CD4-positive, alpha-beta T cell (primary cell): ENCODE measurements at regions of chr13 and their contacts with region 1.

Region 1: GRCh38 chr13:20940083-20940880 is 37.7 kb upstream of the XPO4 start:
- DNase-seq: no peak
- ATAC-seq: no peak
- H3K4me3 ChIP-seq: no peak overlapping the region
- H3K4me3 Mint-ChIP-seq: no peak overlapping the region
- H3K27ac ChIP-seq: no peak overlapping the region
- H3K27ac Mint-ChIP-seq: no peak overlapping the region
- H3K4me1 ChIP-seq: no peaks in the 10 kb centered on the region
- H3K4me1 Mint-ChIP-seq: no peaks in the 10 kb centered on the region
- H3K27me3 ChIP-seq: peaks cover 0 to 5% of the 10 kb centered on the region in 2 experiments
- H3K27me3 Mint-ChIP-seq: peaks cover 30% of the 10 kb centered on the region
- CTCF ChIP-seq: no peak

Region 2: DNA sequence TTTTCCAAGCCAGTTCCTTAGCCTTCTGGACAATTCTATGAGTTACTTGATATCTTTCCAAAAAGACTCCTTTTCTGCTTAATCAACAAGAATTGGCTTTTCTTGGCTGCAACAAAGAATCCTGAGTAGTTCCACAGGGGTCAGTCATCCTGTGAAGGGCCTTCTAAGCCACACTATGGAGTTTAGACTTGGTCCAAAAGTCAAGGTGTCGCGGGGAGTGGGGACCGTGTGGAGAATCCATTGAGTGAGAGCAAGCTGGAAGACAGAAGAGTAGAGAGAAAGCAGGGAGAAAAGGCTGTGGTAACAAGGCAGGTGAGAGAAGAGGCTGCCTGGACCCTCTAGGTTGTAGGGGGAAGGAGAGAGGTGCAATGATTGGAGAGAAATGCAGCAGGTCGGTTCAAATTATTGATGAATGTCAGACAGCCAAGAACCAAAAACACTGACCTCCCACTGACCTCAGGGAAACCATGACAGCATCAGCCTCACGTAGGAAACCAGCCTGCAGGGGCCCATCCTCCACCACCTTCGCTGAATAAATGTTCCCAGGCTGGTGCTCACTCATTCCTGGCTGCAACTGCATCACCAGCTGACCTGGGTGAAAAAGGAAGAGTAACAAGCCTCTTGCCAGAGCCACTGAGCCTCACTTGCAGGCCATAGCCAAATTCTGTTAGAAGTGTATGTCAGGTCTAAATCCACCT is 380.5 kb before region 1 on chr13:
- CTCF ChIA-PET with region 1: no interaction called
- POLR2A ChIA-PET with region 1: no interaction called
- intact Hi-C with region 1: no loop called
- DNase-seq: no peak
- ATAC-seq: no peak
- H3K4me3 ChIP-seq: no peak overlapping the region
- H3K4me3 Mint-ChIP-seq: no peak overlapping the region
- H3K27ac ChIP-seq: no peak overlapping the region
- H3K27ac Mint-ChIP-seq: no peak overlapping the region
- H3K4me1 ChIP-seq: no peaks in the 10 kb centered on the region
- H3K4me1 Mint-ChIP-seq: no peaks in the 10 kb centered on the region
- H3K27me3 ChIP-seq: no peaks in the 10 kb centered on the region
- H3K27me3 Mint-ChIP-seq: no peaks in the 10 kb centered on the region
- CTCF ChIP-seq: no peak

Region 3: DNA sequence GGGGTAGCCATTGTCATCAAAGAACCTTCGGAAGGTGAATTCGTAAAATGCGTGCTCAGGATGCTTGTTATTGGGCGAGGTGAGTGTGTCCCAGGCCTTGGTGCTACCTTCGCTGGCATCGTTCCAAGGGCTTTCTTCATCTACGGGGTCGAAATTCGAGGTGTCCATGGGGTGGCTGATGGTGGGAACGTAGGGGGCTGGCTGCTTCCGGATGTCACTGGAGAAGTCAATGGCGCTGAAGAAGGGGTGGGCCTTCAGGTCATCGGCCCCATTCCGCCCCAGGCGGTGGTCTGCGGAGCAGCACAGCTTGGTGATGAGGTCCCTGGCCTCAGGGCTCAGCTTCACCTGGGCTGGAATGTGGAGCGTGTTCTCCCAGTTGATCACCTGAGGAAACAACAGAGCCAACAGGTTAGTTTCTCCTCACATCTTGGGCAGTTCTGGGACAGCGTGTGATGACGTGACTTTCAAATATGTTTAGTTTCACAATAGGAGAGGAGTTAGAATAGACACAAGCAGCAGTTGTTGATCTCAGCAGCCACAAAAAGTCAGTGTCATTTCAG is 34.8 kb after region 1 on chr13:
- CTCF ChIA-PET with region 1: no interaction called
- POLR2A ChIA-PET with region 1: no interaction called
- intact Hi-C with region 1: no loop called
- DNase-seq: no peak
- ATAC-seq: no peak
- H3K4me3 ChIP-seq: no peak overlapping the region
- H3K4me3 Mint-ChIP-seq: no peak overlapping the region
- H3K27ac ChIP-seq: no peak overlapping the region
- H3K27ac Mint-ChIP-seq: no peak overlapping the region
- H3K4me1 ChIP-seq: no peaks in the 10 kb centered on the region
- H3K4me1 Mint-ChIP-seq: no peaks in the 10 kb centered on the region
- H3K27me3 ChIP-seq: no peaks in the 10 kb centered on the region
- H3K27me3 Mint-ChIP-seq: no peaks in the 10 kb centered on the region
- CTCF ChIP-seq: no peak

Region 4: GRCh38 chr13:20990910-20991525 is 50.7 kb after region 1 on chr13:
- CTCF ChIA-PET with region 1: no interaction called
- POLR2A ChIA-PET with region 1: no interaction called
- intact Hi-C with region 1: no loop called
- DNase-seq: no peak
- ATAC-seq: no peak
- H3K4me3 ChIP-seq: no peak overlapping the region
- H3K4me3 Mint-ChIP-seq: no peak overlapping the region
- H3K27ac ChIP-seq: no peak overlapping the region
- H3K27ac Mint-ChIP-seq: no peak overlapping the region
- H3K4me1 ChIP-seq: no peaks in the 10 kb centered on the region
- H3K4me1 Mint-ChIP-seq: peaks cover 4% of the 10 kb centered on the region
- H3K27me3 ChIP-seq: no peaks in the 10 kb centered on the region
- H3K27me3 Mint-ChIP-seq: no peaks in the 10 kb centered on the region
- CTCF ChIP-seq: no peak

Region 5: DNA sequence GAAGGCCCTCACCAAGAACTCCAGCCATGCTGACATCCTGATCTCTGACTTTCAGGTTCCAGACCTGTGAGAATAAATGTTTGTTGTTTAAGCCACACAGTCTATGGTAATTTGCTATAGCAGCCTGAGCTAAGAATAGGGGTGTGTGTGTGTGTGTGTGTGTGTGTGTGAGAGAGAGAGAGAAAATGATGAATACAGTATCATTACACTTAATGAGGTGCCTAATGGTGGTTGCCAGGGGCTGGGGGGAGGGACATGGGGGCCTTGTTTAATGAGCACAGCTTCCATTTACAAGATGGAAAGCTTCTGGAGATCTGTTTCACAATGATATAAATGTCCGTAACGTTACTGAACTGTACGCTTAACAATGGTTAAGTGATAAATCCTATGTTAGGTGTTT is 174.9 kb after region 1 on chr13:
- CTCF ChIA-PET with region 1: no interaction called
- POLR2A ChIA-PET with region 1: no interaction called
- intact Hi-C with region 1: loop called in 1 of 2 experiments (anchors 2 kb)
- DNase-seq: no peak
- ATAC-seq: no peak
- H3K4me3 ChIP-seq: no peak overlapping the region
- H3K4me3 Mint-ChIP-seq: no peak overlapping the region
- H3K27ac ChIP-seq: no peak overlapping the region
- H3K27ac Mint-ChIP-seq: no peak overlapping the region
- H3K4me1 ChIP-seq: peaks cover 4% of the 10 kb centered on the region
- H3K4me1 Mint-ChIP-seq: no peaks in the 10 kb centered on the region
- H3K27me3 ChIP-seq: no peaks in the 10 kb centered on the region
- H3K27me3 Mint-ChIP-seq: no peaks in the 10 kb centered on the region
- CTCF ChIP-seq: no peak

Region 6: GRCh38 chr13:21130116-21130515 is 189.8 kb after region 1 on chr13:
- CTCF ChIA-PET with region 1: no interaction called
- POLR2A ChIA-PET with region 1: no interaction called
- intact Hi-C with region 1: loop called in 1 of 2 experiments (anchors 5 kb)
- DNase-seq: no peak
- ATAC-seq: no peak
- H3K4me3 ChIP-seq: no peak overlapping the region
- H3K4me3 Mint-ChIP-seq: no peak overlapping the region
- H3K27ac ChIP-seq: no peak overlapping the region
- H3K27ac Mint-ChIP-seq: no peak overlapping the region
- H3K4me1 ChIP-seq: no peaks in the 10 kb centered on the region
- H3K4me1 Mint-ChIP-seq: no peaks in the 10 kb centered on the region
- H3K27me3 ChIP-seq: no peaks in the 10 kb centered on the region
- H3K27me3 Mint-ChIP-seq: peaks cover 20% of the 10 kb centered on the region
- CTCF ChIP-seq: no peak

Region 7: GRCh38 chr13:21181671-21182070 is 241.4 kb after region 1 on chr13:
- CTCF ChIA-PET with region 1: no interaction called
- POLR2A ChIA-PET with region 1: no interaction called
- intact Hi-C with region 1: loop called (anchors 5 to 10 kb)
- DNase-seq: no peak
- ATAC-seq: no peak
- H3K4me3 ChIP-seq: no peak overlapping the region
- H3K4me3 Mint-ChIP-seq: no peak overlapping the region
- H3K27ac ChIP-seq: no peak overlapping the region
- H3K27ac Mint-ChIP-seq: no peak overlapping the region
- H3K4me1 ChIP-seq: peaks cover 18% of the 10 kb centered on the region
- H3K4me1 Mint-ChIP-seq: peaks cover 23% of the 10 kb centered on the region
- H3K27me3 ChIP-seq: no peaks in the 10 kb centered on the region
- H3K27me3 Mint-ChIP-seq: no peaks in the 10 kb centered on the region
- CTCF ChIP-seq: no peak

Region 8: GRCh38 chr13:21465710-21466160 is 525.5 kb after region 1 on chr13:
- CTCF ChIA-PET with region 1: no interaction called
- POLR2A ChIA-PET with region 1: no interaction called
- intact Hi-C with region 1: loop called in 1 of 2 experiments (anchors 2 kb)
- DNase-seq: no peak
- ATAC-seq: no peak
- H3K4me3 ChIP-seq: no peak overlapping the region
- H3K4me3 Mint-ChIP-seq: no peak overlapping the region
- H3K27ac ChIP-seq: no peak overlapping the region
- H3K27ac Mint-ChIP-seq: no peak overlapping the region
- H3K4me1 ChIP-seq: no peaks in the 10 kb centered on the region
- H3K4me1 Mint-ChIP-seq: no peaks in the 10 kb centered on the region
- H3K27me3 ChIP-seq: no peaks in the 10 kb centered on the region
- H3K27me3 Mint-ChIP-seq: no peaks in the 10 kb centered on the region
- CTCF ChIP-seq: no peak

Region 9: DNA sequence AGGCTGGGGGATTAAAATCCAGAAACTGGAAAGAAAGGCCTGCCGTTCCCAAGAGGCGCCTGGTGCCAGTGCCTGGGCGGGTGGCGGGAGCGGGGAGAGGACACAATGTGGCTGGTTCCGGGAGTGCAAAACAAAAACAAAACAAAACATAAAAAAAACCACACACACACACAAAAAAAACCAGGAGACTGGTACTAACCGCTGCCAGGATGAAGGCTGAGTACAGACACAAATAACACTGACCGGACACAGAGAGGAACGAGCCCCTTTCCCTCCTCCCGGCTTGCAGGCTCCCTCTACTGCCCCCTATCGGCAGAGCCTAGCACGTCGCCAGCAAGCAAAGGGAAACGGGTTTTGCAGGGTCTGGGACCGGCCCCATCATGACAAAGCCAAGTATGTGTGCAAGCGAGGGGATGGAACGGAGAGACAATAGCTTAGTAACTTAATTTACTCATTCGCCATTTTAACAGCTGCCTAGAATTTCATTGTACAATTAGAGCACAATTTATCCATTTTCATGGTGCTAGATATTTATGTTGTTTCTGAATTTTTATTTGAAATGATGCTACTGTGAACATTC is 536.7 kb after region 1 on chr13:
- CTCF ChIA-PET with region 1: no interaction called
- POLR2A ChIA-PET with region 1: no interaction called
- intact Hi-C with region 1: loop called (anchors 1 kb)
- DNase-seq: peak; percentile 64 to 89 (median 72)
- ATAC-seq: peak; percentile 80
- H3K4me3 ChIP-seq: peak overlapping the region; percentile 37
- H3K4me3 Mint-ChIP-seq: peak overlapping the region; percentile 78
- H3K27ac ChIP-seq: no peak overlapping the region
- H3K27ac Mint-ChIP-seq: no peak overlapping the region
- H3K4me1 ChIP-seq: peaks cover 6% of the 10 kb centered on the region
- H3K4me1 Mint-ChIP-seq: peaks cover 17% of the 10 kb centered on the region
- H3K27me3 ChIP-seq: no peaks in the 10 kb centered on the region
- H3K27me3 Mint-ChIP-seq: peaks cover 10% of the 10 kb centered on the region
- CTCF ChIP-seq: peak; percentile 97

Region 10: GRCh38 chr13:22801402-22802003 is 1861.2 kb after region 1 on chr13:
- CTCF ChIA-PET with region 1: no interaction called
- POLR2A ChIA-PET with region 1: no interaction called
- intact Hi-C with region 1: loop called in 1 of 2 experiments (anchors 5 kb)
- DNase-seq: no peak
- ATAC-seq: no peak
- H3K4me3 ChIP-seq: no peak overlapping the region
- H3K4me3 Mint-ChIP-seq: no peak overlapping the region
- H3K27ac ChIP-seq: no peak overlapping the region
- H3K27ac Mint-ChIP-seq: no peak overlapping the region
- H3K4me1 ChIP-seq: no peaks in the 10 kb centered on the region
- H3K4me1 Mint-ChIP-seq: no peaks in the 10 kb centered on the region
- H3K27me3 ChIP-seq: no peaks in the 10 kb centered on the region
- H3K27me3 Mint-ChIP-seq: peaks cover 35% of the 10 kb centered on the region
- CTCF ChIP-seq: no peak